H1 (cell line): ENCODE measurements at regions of chr2 and their contacts with region 1.

Region 1: GRCh38 chr2:209577376-209578357 is 153.8 kb downstream of the MAP2 start:
- DNase-seq: no peak
- H3K4me3 ChIP-seq: no peak overlapping the region
- H3K27ac ChIP-seq: no peak overlapping the region
- H3K4me1 ChIP-seq: peaks cover 0 to 11% (median 5%) of the 10 kb centered on the region in 4 experiments; a peak in 5 of 7 replicates
- H3K27me3 ChIP-seq: no peaks in the 10 kb centered on the region
- CTCF ChIP-seq: no peak; a peak in 1 of 4 replicates
- EP300 ChIP-seq: no peak
- POLR2A ChIP-seq: no peak
- RAD21 ChIP-seq: no peak; a peak in 1 of 4 replicates

Region 2: DNA sequence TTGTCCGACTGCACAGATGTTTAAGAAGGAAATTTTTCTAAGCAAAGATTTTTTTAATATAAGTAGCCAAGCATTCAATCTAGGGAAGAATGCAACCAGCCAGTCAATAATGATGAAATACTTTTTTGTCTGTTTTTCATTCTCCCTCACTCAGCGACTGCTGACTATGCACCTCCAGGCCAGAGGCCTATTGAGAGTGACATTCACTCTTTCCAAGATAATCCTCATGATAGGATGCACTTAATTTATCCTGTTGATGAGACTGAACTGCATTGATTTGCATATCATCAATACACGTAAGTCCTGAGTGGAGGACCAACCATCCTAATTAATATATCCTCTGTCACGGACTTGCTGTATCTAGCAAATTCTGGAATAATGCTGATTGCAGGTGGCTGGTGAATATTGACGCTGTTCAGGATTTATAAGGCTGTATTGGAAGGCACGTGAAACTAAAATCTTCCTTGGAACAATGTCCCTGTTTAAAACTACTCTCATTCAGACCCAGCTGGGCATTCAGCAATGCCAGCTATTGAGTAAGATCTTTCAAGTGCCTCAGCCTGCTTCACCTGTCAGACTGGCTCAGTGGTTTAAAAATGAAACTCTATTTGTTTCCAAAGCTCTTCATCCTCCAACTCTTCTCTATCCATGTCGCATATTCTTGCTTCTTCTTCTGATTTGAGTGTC is 11.6 kb before region 1 on chr2:
- CTCF ChIA-PET with region 1: interaction called, 11 read pairs
- POLR2A ChIA-PET with region 1: no interaction called
- DNase-seq: no peak
- H3K4me3 ChIP-seq: no peak overlapping the region
- H3K27ac ChIP-seq: no peak overlapping the region
- H3K4me1 ChIP-seq: no peaks in the 10 kb centered on the region
- H3K27me3 ChIP-seq: no peaks in the 10 kb centered on the region
- CTCF ChIP-seq: no peak
- EP300 ChIP-seq: no peak
- POLR2A ChIP-seq: no peak
- RAD21 ChIP-seq: no peak